Spleen (tissue), 13 donors: ENCODE measurements at regions of chr4 and their contacts with region 1.

Region 1: GRCh38 chr4:80125252-80126177 is 52.5 kb upstream of the ANTXR2 start:
- DNase-seq: no peak
- H3K4me3 ChIP-seq: no peak overlapping the region
- H3K27ac ChIP-seq: peak overlapping the region in 5 of 8 donors; percentile 7 to 65 (median 52)
- H3K4me1 ChIP-seq: peaks cover 3 to 40% (median 4%) of the 10 kb centered on the region in 6 donors
- H3K27me3 ChIP-seq: no peaks in the 10 kb centered on the region
- CTCF ChIP-seq: peak in 9 of 11 experiments; percentile 32 to 59 (median 51)
- POLR2A ChIP-seq: no peak

Region 2: GRCh38 chr4:80184053-80184790 is 58.7 kb after region 1 on chr4:
- intact Hi-C with region 1: loop called (anchors 10 kb)
- DNase-seq: peak; percentile 98
- H3K4me3 ChIP-seq: peak overlapping the region; percentile 46 to 72 (median 53)
- H3K27ac ChIP-seq: peak overlapping the region; percentile 48 to 85 (median 74)
- H3K4me1 ChIP-seq: peaks cover 21 to 59% (median 40%) of the 10 kb centered on the region in 6 donors
- H3K27me3 ChIP-seq: peaks cover 0 to 48% (median 40%) of the 10 kb centered on the region in 7 donors
- CTCF ChIP-seq: peak; percentile 81 to 98 (median 90)
- POLR2A ChIP-seq: no peak